ENCODE measurements at regions of chr4 and their contacts with region 1.

Region 1: DNA sequence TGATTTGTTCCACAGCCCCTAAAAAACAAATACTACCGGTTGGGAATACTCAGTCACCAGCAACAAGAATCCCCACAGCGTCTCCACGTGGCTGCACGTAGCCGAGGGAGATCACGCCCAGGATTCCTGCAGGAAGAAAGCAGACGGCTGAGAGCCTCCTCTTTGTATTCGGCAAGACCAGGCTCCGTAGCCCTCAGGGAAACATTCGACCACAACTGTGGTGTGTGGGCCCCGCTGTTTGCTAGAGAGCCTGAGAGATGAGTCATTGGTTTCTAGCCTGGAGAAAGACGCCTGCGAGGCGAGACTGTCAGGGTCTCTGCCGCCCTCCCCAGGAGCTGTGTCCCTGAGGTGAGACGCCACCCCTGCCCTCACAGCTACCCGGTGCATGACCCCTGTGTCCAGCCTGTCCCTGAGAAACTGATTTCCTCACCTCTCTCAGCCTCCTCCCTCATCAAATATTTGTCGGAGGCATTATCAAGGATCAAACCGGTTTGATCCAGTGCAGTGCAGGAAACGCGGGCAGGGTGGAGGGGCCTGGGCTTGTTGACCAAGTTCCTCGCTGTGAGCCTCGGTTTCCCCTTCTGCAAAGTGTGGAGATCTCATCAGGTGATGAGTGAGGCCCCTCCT is 4.7 kb upstream of the S100P start:
- DNase-seq: peak; percentile 38
- ATAC-seq: peak; percentile 41
- H3K4me3 Mint-ChIP-seq: no peak overlapping the region
- H3K27ac Mint-ChIP-seq: peak overlapping the region; percentile 77; the same call in 1 of the 2 replicates
- H3K4me1 Mint-ChIP-seq: peaks cover 27% of the 10 kb centered on the region
- H3K27me3 Mint-ChIP-seq: peaks cover 4% of the 10 kb centered on the region; the same call in 1 of the 2 replicates
- CTCF ChIP-seq: no peak

Region 2: GRCh38 chr4:6427439-6428090 is 261.4 kb before region 1 on chr4:
- CTCF ChIA-PET with region 1: no interaction called
- POLR2A ChIA-PET with region 1: no interaction called
- DNase-seq: no peak
- ATAC-seq: peak; percentile 74
- H3K4me3 Mint-ChIP-seq: no peak overlapping the region
- H3K27ac Mint-ChIP-seq: no peak overlapping the region
- H3K4me1 Mint-ChIP-seq: no peaks in the 10 kb centered on the region
- H3K27me3 Mint-ChIP-seq: no peaks in the 10 kb centered on the region
- CTCF ChIP-seq: no peak

Region 3: DNA sequence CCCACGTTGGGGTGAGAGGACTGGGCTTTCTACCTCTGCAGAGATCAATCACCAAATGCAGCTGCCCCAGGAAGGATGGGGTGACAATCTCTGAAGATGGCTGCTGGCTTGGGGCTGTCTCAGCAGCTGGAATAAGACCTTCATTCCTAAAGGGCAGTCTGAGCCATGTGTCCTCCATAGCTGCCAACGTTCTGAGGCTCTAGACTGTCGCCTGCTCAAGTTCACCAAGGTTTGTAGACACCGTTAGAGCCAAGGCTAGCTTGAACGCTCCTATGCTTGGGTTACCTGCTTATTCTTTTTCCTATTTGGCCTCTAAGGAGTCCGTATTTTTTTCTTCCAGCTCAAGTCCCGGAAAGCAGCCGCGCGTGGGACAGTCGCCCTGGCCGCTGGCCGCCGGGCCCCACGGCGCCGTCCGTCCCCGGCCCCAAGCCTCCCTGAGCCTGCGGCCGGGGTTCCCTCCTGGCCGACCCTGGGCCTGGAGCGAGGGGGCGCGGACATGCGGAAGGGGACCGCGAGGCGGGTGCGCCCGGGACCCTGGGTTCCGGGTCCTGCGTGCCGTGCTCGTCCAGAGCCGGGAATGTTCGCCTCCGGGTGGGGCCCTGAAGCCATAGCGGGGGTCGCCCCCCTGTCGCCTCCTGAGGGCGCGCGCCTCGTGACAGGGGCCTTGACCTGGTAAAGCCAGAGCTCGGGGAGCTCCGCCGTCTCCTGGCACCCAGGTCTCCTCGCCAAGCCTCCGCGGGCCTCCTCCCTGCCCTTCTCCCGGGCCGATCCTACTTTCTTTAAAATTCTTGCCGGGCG is 25.2 kb before region 1 on chr4:
- CTCF ChIA-PET with region 1: interaction called, 17 read pairs
- POLR2A ChIA-PET with region 1: no interaction called
- DNase-seq: peak; percentile 34
- ATAC-seq: peak; percentile 49
- H3K4me3 Mint-ChIP-seq: peak overlapping the region; percentile 45
- H3K27ac Mint-ChIP-seq: no peak overlapping the region
- H3K4me1 Mint-ChIP-seq: no peaks in the 10 kb centered on the region
- H3K27me3 Mint-ChIP-seq: peaks cover 57% of the 10 kb centered on the region
- CTCF ChIP-seq: no peak

Region 4: DNA sequence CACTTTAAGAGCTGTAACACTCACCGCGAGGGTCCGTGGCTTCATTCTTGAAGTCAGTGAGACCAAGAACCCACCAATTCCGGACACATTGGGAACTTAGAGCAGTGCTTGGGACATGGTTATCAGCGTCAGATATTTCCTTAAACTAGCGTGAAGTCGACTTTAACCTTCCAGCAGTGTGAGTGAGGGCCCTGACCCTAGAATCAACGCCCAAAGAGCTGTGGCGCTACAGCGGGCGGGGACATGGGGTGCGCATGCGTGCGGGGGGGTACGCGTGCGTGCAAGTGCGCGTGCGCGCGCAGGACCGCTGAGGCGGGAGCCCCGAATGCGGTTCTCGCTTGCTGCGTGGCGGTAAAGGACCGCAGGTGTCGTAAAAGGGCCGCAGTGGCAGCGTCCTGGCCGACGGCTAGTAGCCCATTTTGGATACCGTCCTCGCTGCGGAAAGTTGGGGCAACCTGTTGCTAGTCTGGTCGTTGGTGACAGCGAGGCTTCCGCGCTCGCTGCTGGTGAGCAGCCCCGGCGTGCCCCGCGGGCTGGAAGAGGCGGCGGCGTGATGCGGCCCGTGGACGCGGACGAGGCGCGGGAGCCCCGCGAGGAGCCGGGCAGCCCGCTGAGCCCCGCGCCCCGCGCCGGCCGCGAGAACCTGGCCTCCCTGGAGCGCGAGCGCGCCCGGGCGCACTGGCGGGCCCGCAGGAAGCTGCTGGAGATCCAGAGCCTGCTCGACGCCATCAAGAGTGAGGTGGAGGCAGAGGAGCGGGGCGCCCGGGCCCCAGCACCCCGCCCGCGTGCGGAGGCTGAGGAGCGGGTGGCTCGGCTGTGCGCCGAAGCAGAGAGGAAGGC is 15.1 kb before region 1 on chr4:
- CTCF ChIA-PET with region 1: interaction called, 21 read pairs
- POLR2A ChIA-PET with region 1: no interaction called
- DNase-seq: peak; percentile 95
- ATAC-seq: peak; percentile 84
- H3K4me3 Mint-ChIP-seq: peak overlapping the region; percentile 90
- H3K27ac Mint-ChIP-seq: peak overlapping the region; percentile 96
- H3K4me1 Mint-ChIP-seq: peaks cover 31% of the 10 kb centered on the region
- H3K27me3 Mint-ChIP-seq: peaks cover 28% of the 10 kb centered on the region
- CTCF ChIP-seq: no peak

Region 5: GRCh38 chr4:6709230-6710114 is 20.5 kb after region 1 on chr4 and contains the start of gene MRFAP1L1:
- CTCF ChIA-PET with region 1: interaction called, 10 read pairs
- POLR2A ChIA-PET with region 1: no interaction called
- DNase-seq: peak; percentile 98
- ATAC-seq: peak; percentile 82
- H3K4me3 Mint-ChIP-seq: peak within 1 kb of the TSS; percentile 98
- H3K27ac Mint-ChIP-seq: peak within 1 kb of the TSS; percentile 98
- H3K4me1 Mint-ChIP-seq: peaks cover 27% of the 10 kb centered on the region
- H3K27me3 Mint-ChIP-seq: peaks cover 29% of the 10 kb centered on the region
- CTCF ChIP-seq: no peak; the same call in 1 of the 2 replicates
- total RNA-seq, gene MRFAP1L1: 52.0 to 56.9 TPM (median 54.4 TPM) in 3 replicates

Region 6: DNA sequence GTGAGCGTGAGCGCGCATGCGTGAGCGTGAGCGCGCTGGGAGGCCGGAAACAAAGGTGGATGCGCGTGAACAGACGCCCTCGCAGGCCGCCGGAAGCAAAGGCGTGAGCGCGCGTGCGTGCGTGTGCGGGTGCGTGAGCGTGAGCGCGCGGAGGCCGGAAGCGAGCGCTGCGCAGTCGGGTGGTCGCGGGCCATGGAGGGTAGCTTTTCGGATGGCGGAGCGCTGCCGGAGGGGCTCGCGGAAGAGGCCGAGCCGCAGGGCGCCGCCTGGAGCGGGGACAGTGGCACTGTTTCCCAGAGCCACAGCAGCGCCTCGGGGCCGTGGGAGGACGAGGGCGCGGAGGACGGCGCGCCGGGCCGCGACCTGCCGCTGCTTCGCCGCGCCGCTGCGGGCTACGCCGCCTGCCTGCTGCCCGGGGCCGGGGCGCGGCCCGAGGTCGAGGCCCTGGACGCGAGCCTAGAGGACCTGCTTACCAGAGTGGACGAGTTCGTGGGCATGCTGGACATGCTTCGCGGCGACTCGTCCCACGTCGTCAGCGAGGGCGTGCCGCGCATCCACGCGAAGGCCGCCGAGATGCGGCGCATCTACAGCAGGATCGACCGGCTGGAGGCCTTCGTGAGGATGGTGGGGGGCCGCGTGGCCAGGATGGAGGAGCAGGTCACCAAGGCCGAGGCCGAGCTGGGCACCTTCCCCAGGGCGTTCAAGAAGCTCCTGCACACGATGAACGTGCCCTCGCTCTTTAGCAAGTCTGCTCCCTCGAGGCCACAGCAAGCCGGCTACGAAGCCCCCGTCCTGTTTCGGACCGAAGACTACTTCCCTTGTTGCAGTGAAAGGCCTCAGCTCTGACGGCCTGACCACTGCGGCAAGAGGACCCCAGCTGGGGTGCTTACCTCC is 27.3 kb after region 1 on chr4 and contains the start of gene BLOC1S4:
- CTCF ChIA-PET with region 1: interaction called, 11 read pairs
- POLR2A ChIA-PET with region 1: no interaction called
- DNase-seq: peak; percentile 77
- ATAC-seq: peak; percentile 73
- H3K4me3 Mint-ChIP-seq: peak within 1 kb of the TSS; percentile 75
- H3K27ac Mint-ChIP-seq: peak within 1 kb of the TSS; percentile 96
- H3K4me1 Mint-ChIP-seq: peaks cover 8% of the 10 kb centered on the region
- H3K27me3 Mint-ChIP-seq: peaks cover 34% of the 10 kb centered on the region
- CTCF ChIP-seq: no peak
- total RNA-seq, gene BLOC1S4: 21.4 to 23.4 TPM (median 21.9 TPM) in 3 replicates

Measured in WTC11 (cell line).